Activated CD4-positive, alpha-beta T cell treated with anti-CD3 and anti-CD28 coated beads for 36 hours (primary cell): ENCODE measurements at regions of chr13 and their contacts with region 1.

Region 1: DNA sequence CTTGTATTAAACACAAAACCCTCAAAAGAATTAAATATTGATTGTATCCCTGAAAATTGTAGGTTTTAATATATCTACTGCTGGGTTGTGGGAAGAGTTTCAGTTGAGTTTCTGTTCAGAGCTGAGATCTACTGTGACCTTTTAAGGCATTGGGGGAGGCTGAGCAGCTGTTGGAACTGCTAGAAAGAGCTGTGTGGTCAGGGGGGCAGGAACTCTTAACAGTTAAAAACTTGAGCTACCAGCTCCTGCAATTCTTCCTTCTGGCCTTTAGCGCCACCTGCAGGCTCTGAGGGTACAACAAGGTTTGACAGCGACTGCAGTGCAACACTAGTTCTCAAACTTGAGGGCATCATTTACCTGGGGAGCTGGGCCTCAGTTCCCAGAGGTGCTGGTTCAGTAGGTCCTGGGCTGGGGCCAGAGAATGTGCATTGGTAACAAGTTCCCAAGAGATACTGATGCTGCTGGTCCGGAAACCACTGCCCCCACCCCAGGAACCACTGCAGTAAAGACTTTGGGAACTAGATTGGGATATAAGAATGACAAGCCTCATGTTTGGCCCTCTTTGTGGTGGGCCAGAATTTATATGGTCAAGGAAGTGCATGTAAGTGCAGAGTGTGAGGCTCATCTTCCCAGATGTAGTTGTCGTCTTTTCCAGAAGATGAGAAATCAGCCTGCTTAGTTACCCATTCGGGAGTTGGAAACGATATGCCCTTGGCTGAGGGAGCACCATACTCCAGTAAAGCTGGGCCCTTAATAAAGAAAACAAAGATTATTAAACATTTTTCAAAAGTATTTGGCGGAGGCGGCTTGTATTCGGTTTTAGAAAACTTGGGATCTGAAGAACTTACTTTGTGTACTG is 2.6 kb downstream of the RNASEH2B start:
- DNase-seq: peak; percentile 96
- ATAC-seq: peak; percentile 52
- H3K4me3 Mint-ChIP-seq: peak overlapping the region; percentile 95
- H3K27ac Mint-ChIP-seq: peak overlapping the region; percentile 99
- H3K4me1 Mint-ChIP-seq: peaks cover 44% of the 10 kb centered on the region
- H3K27me3 Mint-ChIP-seq: no peaks in the 10 kb centered on the region

Region 2: DNA sequence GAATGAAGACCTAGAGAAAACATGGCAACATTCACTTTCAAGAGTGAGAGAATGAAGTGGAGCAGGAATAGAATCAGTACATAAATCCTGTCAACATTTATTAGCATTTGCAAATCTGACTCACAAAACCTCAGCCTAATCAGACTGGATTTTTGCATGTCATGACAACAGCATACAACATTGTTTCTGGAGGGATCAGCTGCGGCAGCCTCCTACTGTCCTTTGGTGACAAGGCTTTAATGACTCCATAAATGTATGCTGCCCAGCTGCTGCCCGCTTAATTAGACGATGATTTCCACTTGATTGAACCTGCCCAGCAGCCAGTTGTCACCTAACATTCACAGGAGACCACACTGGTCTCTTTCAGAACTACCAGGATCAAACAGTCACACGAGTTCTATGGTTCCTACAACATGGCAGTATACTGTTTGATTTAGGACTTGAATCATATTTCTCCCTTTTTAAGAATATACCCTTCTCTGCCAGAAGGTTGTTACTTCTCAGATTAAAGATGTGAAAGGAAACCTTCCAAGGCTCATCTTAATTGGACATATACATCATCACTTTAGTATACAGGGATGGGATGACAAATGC is 1230.2 kb before region 1 on chr13:
- CTCF ChIA-PET with region 1: no interaction called
- POLR2A ChIA-PET with region 1: no interaction called
- intact Hi-C with region 1: loop called in 1 of 2 experiments (anchors 10 kb)
- DNase-seq: no peak
- ATAC-seq: no peak
- H3K4me3 Mint-ChIP-seq: no peak overlapping the region
- H3K27ac Mint-ChIP-seq: no peak overlapping the region
- H3K4me1 Mint-ChIP-seq: peaks cover 17% of the 10 kb centered on the region
- H3K27me3 Mint-ChIP-seq: no peaks in the 10 kb centered on the region

Region 3: DNA sequence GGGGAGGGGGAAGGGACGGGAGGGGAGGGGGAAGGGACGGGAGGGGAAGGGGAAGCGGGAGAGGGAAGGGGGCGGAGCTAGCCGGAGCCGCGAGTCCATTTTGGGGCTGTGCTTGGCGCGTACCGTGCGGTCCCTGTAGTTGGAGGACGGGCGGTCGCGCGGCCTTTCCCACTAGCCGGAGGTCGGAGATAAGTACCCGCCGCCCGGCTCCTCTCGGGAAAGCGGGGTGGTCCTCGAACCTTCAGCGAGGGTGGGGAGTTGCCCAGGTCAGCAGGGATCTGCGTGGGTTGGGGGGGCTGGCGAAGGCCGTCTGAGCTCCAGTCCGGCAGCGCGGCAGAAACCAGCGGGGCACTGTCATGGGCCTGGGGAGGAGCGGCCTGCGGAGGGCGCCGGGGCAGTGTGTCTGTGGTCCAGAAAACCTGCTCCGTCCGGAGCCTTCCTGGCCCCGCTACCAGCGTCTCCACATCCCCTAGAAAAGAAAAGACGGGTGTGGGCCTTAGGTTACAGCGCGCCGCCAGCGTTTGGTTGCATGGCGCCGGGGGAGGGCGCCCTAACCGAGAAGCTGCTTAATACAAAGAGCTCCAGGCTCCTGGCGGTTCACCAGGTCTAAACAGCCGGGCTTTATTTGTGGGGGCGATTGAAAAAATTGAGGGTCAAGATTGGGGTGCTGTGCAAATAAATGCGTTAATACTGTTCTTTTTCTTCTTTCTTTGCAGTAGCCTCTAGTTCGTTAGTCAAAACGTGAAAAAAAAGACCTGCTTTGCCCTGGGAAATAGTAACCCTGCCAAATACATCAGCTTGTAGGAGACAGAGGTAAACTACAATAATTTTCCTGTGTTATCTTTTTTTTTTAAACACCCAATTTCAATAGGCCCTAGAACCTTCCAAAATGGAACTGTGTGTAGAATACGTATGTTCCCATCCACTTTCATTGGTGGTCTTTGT is 914.9 kb before region 1 on chr13 and contains the start of gene TRIM13:
- CTCF ChIA-PET with region 1: interaction called, 9 read pairs
- POLR2A ChIA-PET with region 1: interaction called, 7 read pairs
- intact Hi-C with region 1: loop called (anchors 1 to 5 kb)
- DNase-seq: peak; percentile 90
- ATAC-seq: peak; percentile 86
- H3K4me3 Mint-ChIP-seq: peak within 1 kb of the TSS; percentile 77
- H3K27ac Mint-ChIP-seq: peak within 1 kb of the TSS; percentile 76
- H3K4me1 Mint-ChIP-seq: peaks cover 47% of the 10 kb centered on the region
- H3K27me3 Mint-ChIP-seq: no peaks in the 10 kb centered on the region
- total RNA-seq, gene TRIM13: 10.6 to 12.9 TPM

Region 4: DNA sequence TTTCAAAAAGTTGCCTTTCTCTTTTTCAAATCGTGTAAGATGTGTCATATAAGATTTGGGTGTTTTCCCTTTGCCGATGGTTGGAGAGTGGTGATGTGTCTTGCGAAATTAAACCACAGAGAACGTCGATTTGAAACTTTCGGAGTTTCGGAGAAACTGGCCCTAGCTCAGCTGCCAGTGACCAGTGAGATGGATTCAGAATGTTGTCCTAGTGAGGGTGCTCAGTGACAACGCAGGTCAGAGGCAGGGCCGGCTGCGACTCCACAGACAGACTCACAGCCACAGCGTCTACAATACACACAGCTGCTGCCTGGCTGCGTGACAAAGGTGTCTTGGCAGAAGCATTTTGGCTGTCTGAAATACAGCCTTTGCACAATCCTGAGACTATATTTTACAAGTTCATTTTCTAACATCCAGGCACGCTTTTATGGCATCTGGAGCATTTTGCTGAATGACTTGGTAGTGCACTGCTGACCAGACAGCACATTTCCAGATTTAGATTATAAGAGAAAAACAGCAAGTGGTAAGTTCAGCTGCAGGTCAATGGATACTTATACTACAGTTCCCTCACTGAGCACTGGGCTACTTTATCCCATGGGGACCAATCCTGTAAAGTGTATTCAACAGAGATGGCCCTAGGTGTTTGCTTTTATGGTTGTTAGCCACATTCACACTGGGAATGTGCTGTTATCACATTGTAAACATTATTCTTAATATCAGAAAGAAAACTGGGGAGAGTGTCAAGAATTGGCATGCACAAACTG is 689.4 kb before region 1 on chr13:
- CTCF ChIA-PET with region 1: interaction called, 3 read pairs
- POLR2A ChIA-PET with region 1: no interaction called
- intact Hi-C with region 1: loop called in 1 of 2 experiments (anchors 10 kb)
- DNase-seq: peak; percentile 28
- ATAC-seq: no peak
- H3K4me3 Mint-ChIP-seq: no peak overlapping the region
- H3K27ac Mint-ChIP-seq: no peak overlapping the region
- H3K4me1 Mint-ChIP-seq: peaks cover 46% of the 10 kb centered on the region
- H3K27me3 Mint-ChIP-seq: peaks cover 33% of the 10 kb centered on the region

Region 5: DNA sequence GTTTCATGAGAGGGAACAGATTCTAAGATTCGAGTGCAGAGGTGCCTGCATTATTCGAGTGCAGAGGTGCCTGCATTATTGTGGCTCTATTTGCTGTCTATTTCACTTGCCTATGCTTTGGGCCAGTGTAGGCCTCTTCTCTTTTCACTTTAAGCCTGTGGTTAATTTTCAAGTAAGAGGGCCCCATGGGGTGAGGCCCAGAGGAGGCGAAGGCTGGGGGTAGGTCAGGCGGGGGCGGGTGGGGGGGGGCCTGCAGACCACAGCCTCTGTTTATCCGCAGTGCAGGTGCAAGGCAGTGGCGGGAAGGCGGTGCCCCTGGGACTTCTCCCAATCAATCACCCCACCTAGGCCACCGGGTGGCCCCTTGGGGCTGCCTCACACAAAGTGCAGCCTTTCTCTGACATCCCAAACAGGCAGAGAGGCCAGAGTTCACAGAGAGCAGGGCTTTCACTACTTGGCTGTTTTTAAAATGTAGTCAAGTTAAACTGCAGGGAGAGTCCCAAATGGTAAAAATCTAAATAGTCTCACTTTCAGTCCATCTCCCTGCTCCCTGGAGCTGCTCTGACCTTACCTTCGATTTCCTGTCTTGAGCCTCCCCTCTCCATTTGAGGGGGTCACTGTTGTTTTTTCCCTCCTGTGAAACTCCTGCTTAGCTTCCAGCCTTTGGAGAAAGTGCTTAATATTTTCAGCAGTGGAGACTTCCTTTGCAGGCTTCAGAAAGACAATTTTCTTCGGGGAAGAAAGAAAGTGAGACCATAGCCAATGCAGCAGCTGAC is 317.7 kb before region 1 on chr13:
- CTCF ChIA-PET with region 1: no interaction called
- POLR2A ChIA-PET with region 1: no interaction called
- intact Hi-C with region 1: loop called in 1 of 2 experiments (anchors 5 kb)
- DNase-seq: peak; percentile 66
- ATAC-seq: peak; percentile 83
- H3K4me3 Mint-ChIP-seq: no peak overlapping the region
- H3K27ac Mint-ChIP-seq: peak overlapping the region; percentile 80
- H3K4me1 Mint-ChIP-seq: peaks cover 29% of the 10 kb centered on the region
- H3K27me3 Mint-ChIP-seq: no peaks in the 10 kb centered on the region

Region 6: GRCh38 chr13:50893211-50893852 is 18.8 kb before region 1 on chr13:
- CTCF ChIA-PET with region 1: interaction called, 32 read pairs
- POLR2A ChIA-PET with region 1: interaction called, 10 read pairs
- intact Hi-C with region 1: loop called (anchors 1 kb)
- DNase-seq: peak; percentile 37
- ATAC-seq: peak; percentile 94
- H3K4me3 Mint-ChIP-seq: peak overlapping the region; percentile 50
- H3K27ac Mint-ChIP-seq: peak overlapping the region; percentile 89
- H3K4me1 Mint-ChIP-seq: peaks cover 40% of the 10 kb centered on the region
- H3K27me3 Mint-ChIP-seq: no peaks in the 10 kb centered on the region

Region 7: GRCh38 chr13:51419001-51419636 is 507.0 kb after region 1 on chr13:
- CTCF ChIA-PET with region 1: no interaction called
- POLR2A ChIA-PET with region 1: no interaction called
- intact Hi-C with region 1: no loop called
- DNase-seq: no peak
- ATAC-seq: no peak
- H3K4me3 Mint-ChIP-seq: no peak overlapping the region
- H3K27ac Mint-ChIP-seq: no peak overlapping the region
- H3K4me1 Mint-ChIP-seq: peaks cover 73% of the 10 kb centered on the region
- H3K27me3 Mint-ChIP-seq: no peaks in the 10 kb centered on the region

Region 8: DNA sequence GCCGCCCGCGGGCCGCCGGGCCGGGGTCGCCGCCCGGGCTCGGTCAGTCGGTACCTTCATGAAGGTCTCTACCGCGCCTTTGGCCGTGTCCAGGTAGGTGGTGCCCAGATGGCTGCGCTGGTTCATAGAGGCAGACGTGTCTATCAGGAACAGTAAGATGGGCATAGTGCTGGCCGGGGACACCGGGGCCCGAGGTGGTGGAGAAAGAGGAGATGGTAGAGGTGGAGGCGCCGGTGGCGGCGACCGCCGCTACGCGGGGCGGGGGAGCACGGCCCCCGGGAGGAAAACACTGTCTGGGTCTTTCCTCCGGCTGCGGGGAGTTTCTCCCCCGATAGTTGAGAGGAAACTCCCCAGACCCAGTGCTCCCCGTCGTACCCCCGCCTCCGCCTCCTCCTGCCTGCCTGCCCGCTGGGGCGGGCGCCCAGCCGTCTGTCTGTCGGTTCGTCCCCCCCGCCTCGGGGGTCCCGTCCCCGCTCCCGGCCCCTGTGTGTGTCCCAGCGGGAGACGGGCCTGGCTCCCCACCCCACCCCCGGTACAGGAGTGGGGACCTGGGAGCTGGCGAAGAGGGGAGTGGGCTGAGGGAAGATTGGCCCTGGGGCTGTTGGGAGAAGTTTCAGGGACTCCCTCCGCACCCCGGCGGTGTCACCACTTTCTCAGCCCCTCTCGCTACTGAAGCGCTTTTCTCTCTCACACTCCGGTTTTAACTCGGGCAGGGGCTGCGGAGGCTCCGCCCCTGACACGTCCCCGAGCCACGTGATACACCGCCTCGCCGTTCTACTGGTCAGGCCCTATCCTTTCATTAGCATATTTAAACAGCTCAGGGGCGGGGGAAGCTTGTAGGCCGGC is 540.4 kb after region 1 on chr13 and contains the start of gene INTS6:
- CTCF ChIA-PET with region 1: interaction called, 3 read pairs
- POLR2A ChIA-PET with region 1: no interaction called
- intact Hi-C with region 1: loop called in 1 of 2 experiments (anchors 5 kb)
- DNase-seq: peak; percentile 99
- ATAC-seq: peak; percentile 87
- H3K4me3 Mint-ChIP-seq: peak within 1 kb of the TSS; percentile 84
- H3K27ac Mint-ChIP-seq: peak within 1 kb of the TSS; percentile 97
- H3K4me1 Mint-ChIP-seq: peaks cover 33% of the 10 kb centered on the region
- H3K27me3 Mint-ChIP-seq: no peaks in the 10 kb centered on the region
- total RNA-seq, gene INTS6: 47.9 to 50.3 TPM